B cell (primary cell): ENCODE measurements at regions of chr7 and their contacts with region 1.

Region 1: DNA sequence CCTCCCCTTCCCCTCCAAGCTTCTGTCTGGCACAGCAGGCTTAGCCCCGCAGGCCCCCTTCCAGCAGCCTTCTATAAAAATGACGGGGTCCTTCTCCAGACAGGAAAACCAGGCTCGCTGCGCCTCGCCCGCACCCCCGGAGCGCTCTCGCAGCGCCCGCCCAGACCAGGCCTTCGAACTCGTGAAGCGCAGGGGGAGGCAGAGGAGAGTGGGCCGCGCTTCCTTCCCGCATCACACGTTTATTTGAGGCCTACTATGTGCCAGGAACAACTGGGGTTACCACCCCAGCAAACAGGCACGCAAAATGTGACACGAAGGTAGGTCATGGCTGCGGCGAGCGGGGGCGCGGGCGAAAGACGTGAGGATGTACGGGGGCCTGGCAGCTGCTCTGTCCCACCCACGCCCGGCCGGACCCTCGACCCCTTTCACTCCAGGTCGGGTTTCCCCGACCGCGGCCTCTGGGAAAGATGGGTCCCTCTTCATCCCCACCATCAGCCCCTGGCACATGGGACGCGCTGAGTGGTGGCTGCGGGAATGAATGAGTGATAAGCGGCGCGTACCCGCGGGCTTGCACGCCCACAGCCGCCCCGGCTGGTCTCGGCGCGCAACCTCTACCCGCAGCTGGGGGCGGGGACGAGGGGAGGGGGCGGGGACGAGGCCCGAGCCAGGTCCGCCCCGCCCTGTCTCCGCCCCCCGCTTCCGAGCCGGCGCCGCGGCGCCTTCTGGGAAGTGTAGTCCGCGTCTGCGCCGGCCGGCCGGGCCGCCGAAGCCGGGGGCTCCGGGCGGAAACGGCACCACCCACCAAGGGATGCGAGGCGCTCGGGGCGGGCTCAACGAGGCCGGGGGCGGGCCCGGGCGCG is 59.1 kb downstream of the ZNF467 start:
- DNase-seq: peak; percentile 94
- ATAC-seq: peak; percentile 93
- H3K4me3 ChIP-seq: peak overlapping the region in 4 of 5 experiments; percentile 62 to 83 (median 68)
- H3K4me3 Mint-ChIP-seq: peak overlapping the region; percentile 87
- H3K27ac ChIP-seq: no peak overlapping the region
- H3K27ac Mint-ChIP-seq: peak overlapping the region; percentile 78
- H3K4me1 ChIP-seq: peaks cover 10 to 21% of the 10 kb centered on the region in 2 donors
- H3K4me1 Mint-ChIP-seq: peaks cover 22% of the 10 kb centered on the region
- H3K27me3 ChIP-seq: no peaks in the 10 kb centered on the region
- H3K27me3 Mint-ChIP-seq: no peaks in the 10 kb centered on the region
- CTCF ChIP-seq: no peak

Region 2: DNA sequence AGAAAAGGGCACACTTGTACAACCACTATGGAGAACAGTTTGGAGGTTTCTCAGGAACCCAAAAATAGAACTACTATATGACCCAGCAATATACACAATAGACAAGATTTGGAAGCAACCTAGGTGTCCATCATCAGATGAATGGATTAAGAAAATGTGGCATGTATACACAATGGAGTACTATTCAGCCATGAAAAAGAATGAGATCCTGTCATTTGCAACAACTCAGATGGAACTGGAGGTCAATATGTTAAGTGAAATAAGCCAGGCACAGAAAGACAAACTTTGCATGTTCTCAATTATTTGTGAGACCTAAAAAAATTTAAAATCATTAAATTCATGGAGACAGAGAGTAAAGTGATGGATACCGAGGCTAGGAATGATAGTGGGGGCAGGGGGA is 59.7 kb before region 1 on chr7:
- CTCF ChIA-PET with region 1: no interaction called
- POLR2A ChIA-PET with region 1: no interaction called
- intact Hi-C with region 1: no loop called
- DNase-seq: no peak
- ATAC-seq: no peak
- H3K4me3 ChIP-seq: no peak overlapping the region
- H3K4me3 Mint-ChIP-seq: no peak overlapping the region
- H3K27ac ChIP-seq: no peak overlapping the region
- H3K27ac Mint-ChIP-seq: no peak overlapping the region
- H3K4me1 ChIP-seq: no peaks in the 10 kb centered on the region
- H3K4me1 Mint-ChIP-seq: no peaks in the 10 kb centered on the region
- H3K27me3 ChIP-seq: peaks cover 0 to 4% (median 0%) of the 10 kb centered on the region in 4 experiments
- H3K27me3 Mint-ChIP-seq: peaks cover 36% of the 10 kb centered on the region
- CTCF ChIP-seq: no peak

Region 3: DNA sequence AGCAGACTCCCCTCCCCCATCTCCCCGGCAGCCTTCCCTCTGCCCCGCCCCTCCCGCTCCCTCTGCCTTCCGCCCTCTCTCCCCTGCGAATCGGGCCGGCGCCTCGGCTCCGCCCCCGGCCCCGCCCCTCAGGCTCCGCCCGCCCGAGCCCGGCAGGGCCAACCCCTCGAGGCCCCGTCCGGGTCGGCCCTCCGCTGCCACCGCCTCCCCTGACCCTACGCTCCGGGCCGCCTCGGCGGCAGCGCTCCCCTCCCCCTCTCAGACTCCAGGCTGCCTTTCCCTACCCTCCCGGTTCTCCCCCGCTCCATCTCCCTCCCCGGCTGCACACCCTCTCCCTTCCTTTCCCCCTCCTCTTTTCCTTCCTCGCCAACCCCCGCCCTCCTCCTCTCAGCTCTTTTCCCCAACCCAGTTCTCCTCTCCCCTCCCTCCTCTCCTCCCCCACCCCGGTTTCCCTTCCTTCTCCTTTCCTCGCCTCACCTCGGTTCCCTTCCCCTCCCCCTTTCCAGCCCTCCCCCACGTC is 57.5 kb after region 1 on chr7:
- CTCF ChIA-PET with region 1: no interaction called
- POLR2A ChIA-PET with region 1: interaction called, 3 read pairs
- intact Hi-C with region 1: loop called (anchors 1 kb)
- DNase-seq: peak; percentile 89
- ATAC-seq: peak; percentile 97
- H3K4me3 ChIP-seq: peak overlapping the region in 4 of 5 experiments; percentile 53 to 74 (median 64)
- H3K4me3 Mint-ChIP-seq: peak overlapping the region; percentile 78
- H3K27ac ChIP-seq: no peak overlapping the region
- H3K27ac Mint-ChIP-seq: no peak overlapping the region
- H3K4me1 ChIP-seq: peaks cover 7 to 19% of the 10 kb centered on the region in 2 donors
- H3K4me1 Mint-ChIP-seq: peaks cover 9% of the 10 kb centered on the region
- H3K27me3 ChIP-seq: peaks cover 0 to 19% (median 1%) of the 10 kb centered on the region in 4 experiments
- H3K27me3 Mint-ChIP-seq: peaks cover 10% of the 10 kb centered on the region
- CTCF ChIP-seq: no peak

Region 4: GRCh38 chr7:149873074-149873969 is 159.0 kb after region 1 on chr7 and contains the start of gene ATP6V0E2:
- CTCF ChIA-PET with region 1: no interaction called
- POLR2A ChIA-PET with region 1: no interaction called
- intact Hi-C with region 1: loop called (anchors 5 kb)
- DNase-seq: peak; percentile 92
- ATAC-seq: peak; percentile 95
- H3K4me3 ChIP-seq: peak within 1 kb of the TSS; percentile 3 to 90 (median 73)
- H3K4me3 Mint-ChIP-seq: peak within 1 kb of the TSS; percentile 90
- H3K27ac ChIP-seq: peak within 1 kb of the TSS; percentile 41 to 66
- H3K27ac Mint-ChIP-seq: peak within 1 kb of the TSS; percentile 73
- H3K4me1 ChIP-seq: peaks cover 39 to 41% of the 10 kb centered on the region in 2 donors
- H3K4me1 Mint-ChIP-seq: peaks cover 40% of the 10 kb centered on the region
- H3K27me3 ChIP-seq: no peaks in the 10 kb centered on the region
- H3K27me3 Mint-ChIP-seq: no peaks in the 10 kb centered on the region
- CTCF ChIP-seq: no peak
- total RNA-seq, gene ATP6V0E2: 13.5 and 15.4 TPM in 2 replicates

Region 5: GRCh38 chr7:151057989-151058780 is 1343.9 kb after region 1 on chr7:
- CTCF ChIA-PET with region 1: no interaction called
- POLR2A ChIA-PET with region 1: no interaction called
- intact Hi-C with region 1: loop called (anchors 2 kb)
- DNase-seq: peak; percentile 98
- ATAC-seq: peak; percentile 92
- H3K4me3 ChIP-seq: peak overlapping the region; percentile 67 to 90 (median 73)
- H3K4me3 Mint-ChIP-seq: peak overlapping the region; percentile 96
- H3K27ac ChIP-seq: peak overlapping the region; percentile 79 to 82
- H3K27ac Mint-ChIP-seq: peak overlapping the region; percentile 94
- H3K4me1 ChIP-seq: peaks cover 23 to 40% of the 10 kb centered on the region in 2 donors
- H3K4me1 Mint-ChIP-seq: peaks cover 36% of the 10 kb centered on the region
- H3K27me3 ChIP-seq: no peaks in the 10 kb centered on the region
- H3K27me3 Mint-ChIP-seq: no peaks in the 10 kb centered on the region
- CTCF ChIP-seq: no peak